Prostate gland (tissue), 2 donors: ENCODE measurements at regions of chr4 and their contacts with region 1.

Region 1: GRCh38 chr4:122577808-122578781 is 42.8 kb downstream of the IL21 start:
- DNase-seq: peak; percentile 17
- H3K4me3 ChIP-seq: no peak overlapping the region
- H3K27ac ChIP-seq: no peak overlapping the region
- H3K4me1 ChIP-seq: no peaks in the 10 kb centered on the region
- H3K27me3 ChIP-seq: no peaks in the 10 kb centered on the region
- CTCF ChIP-seq: peak in 3 of 4 experiments; percentile 29 to 53 (median 41)
- POLR2A ChIP-seq: no peak

Region 2: GRCh38 chr4:121900132-121900983 is 677.7 kb before region 1 on chr4:
- intact Hi-C with region 1: loop called (anchors 5 kb)
- DNase-seq: peak; percentile 32
- H3K4me3 ChIP-seq: no peak overlapping the region
- H3K27ac ChIP-seq: no peak overlapping the region
- H3K4me1 ChIP-seq: no peaks in the 10 kb centered on the region
- H3K27me3 ChIP-seq: no peaks in the 10 kb centered on the region
- CTCF ChIP-seq: peak; percentile 15 to 70 (median 53)
- POLR2A ChIP-seq: no peak

Region 3: DNA sequence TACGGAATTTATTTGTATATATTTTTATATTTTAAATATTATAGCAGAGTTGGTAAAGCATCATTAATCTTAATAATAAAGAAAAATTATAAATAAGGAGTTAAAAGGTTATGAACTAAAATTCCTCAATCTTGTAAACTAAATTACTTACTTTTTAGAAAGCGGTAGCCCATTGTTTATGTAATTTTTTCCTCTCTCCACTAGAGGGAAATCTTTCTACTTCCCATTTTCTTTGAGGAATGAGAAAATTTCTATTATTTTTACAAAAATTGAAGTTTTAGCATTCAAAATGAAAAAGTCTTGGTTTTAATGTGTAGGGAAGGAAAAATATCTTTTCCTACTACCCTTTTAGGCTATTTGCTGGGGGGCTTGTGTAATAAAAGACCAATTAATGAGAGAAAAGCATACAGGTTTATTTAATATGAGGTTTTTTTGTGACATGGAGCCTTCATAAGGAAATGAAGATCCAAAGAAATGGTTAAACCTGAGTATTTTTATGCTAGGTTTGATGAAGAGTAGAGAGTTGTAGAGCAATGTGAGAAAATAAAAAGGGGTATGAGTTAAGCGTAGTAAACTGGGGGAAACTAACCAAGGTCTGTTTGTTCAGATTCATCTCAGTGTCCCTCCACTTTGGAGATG is 268.0 kb before region 1 on chr4:
- intact Hi-C with region 1: no loop called
- DNase-seq: no peak
- H3K4me3 ChIP-seq: no peak overlapping the region
- H3K27ac ChIP-seq: no peak overlapping the region
- H3K4me1 ChIP-seq: no peaks in the 10 kb centered on the region
- H3K27me3 ChIP-seq: no peaks in the 10 kb centered on the region
- CTCF ChIP-seq: peak in 1 of 4 experiments; percentile 12
- POLR2A ChIP-seq: no peak

Region 4: GRCh38 chr4:122500852-122501501 is 77.1 kb before region 1 on chr4:
- intact Hi-C with region 1: no loop called
- DNase-seq: no peak
- H3K4me3 ChIP-seq: no peak overlapping the region
- H3K27ac ChIP-seq: no peak overlapping the region
- H3K4me1 ChIP-seq: no peaks in the 10 kb centered on the region
- H3K27me3 ChIP-seq: no peaks in the 10 kb centered on the region
- CTCF ChIP-seq: no peak
- POLR2A ChIP-seq: no peak

Region 5: DNA sequence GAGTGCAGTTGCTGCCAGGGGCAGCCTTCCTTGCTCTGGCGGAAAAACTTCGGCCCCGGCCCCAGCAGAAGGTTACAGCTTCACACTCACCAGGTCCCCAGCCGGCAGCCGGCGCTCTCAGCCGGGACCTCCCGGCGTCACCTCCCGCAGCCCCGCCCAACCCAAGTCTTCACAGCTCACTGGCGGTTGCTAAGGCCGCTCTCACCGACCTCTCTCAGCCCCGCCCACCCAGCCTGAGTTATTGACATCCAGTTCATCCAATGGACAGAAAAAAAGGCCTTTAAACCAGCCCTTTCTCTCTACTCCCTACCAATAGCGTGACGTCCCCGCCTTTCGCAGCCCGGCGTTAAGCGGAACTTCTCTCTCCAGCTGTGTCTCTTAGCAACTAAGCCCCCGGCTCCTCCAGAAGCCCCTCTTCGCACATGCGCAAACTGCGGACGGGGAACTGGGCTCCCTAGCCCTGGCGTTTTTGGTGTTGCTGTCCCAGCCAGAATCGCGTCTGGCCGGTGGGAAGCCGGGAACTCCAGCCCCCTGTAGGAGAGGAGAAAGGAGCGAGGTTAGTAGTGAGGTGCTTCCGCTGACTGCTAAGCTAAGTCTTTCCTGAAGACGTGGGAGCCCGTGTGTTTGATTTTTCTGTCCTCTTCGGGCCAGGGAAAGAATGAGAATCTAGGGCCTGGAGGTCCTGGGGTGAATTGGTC is 154.4 kb after region 1 on chr4 and contains the start of gene BBS12:
- intact Hi-C with region 1: no loop called
- DNase-seq: peak; percentile 99
- H3K4me3 ChIP-seq: peak within 1 kb of the TSS; percentile 53 to 56
- H3K27ac ChIP-seq: peak within 1 kb of the TSS; percentile 59 to 65
- H3K4me1 ChIP-seq: no peaks in the 10 kb centered on the region
- H3K27me3 ChIP-seq: no peaks in the 10 kb centered on the region
- CTCF ChIP-seq: peak in 2 of 4 experiments; percentile 27 to 31
- POLR2A ChIP-seq: no peak
- total RNA-seq, gene BBS12: 4.1 to 6.4 TPM

Region 6: DNA sequence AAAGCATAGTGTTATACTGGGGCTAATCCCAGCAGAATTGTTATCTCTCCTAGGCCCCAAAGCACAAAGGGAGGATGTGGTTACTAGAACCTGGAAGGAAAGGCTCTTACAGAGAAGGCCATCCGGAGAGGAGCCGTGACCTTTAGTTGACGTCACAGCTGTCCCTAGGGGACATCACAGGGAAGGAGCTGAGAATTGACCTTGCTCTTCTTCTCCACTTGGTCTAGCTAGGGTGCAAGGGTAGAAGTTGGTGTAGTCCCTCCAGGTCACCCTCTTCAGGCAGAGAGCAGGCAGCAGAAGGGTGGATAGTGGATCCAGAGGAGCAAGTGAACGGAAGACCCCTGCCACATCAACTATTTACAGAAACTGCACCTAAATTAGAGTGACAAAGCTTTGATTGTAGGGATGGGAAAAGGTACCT is 225.7 kb after region 1 on chr4:
- intact Hi-C with region 1: no loop called
- DNase-seq: no peak
- H3K4me3 ChIP-seq: no peak overlapping the region
- H3K27ac ChIP-seq: no peak overlapping the region
- H3K4me1 ChIP-seq: no peaks in the 10 kb centered on the region
- H3K27me3 ChIP-seq: no peaks in the 10 kb centered on the region
- CTCF ChIP-seq: no peak
- POLR2A ChIP-seq: no peak